Sigmoid colon (tissue), 7 donors: ENCODE measurements at regions of chr5 and their contacts with region 1.

Region 1: GRCh38 chr5:40688127-40688761 is 8.5 kb downstream of the PTGER4 start:
- DNase-seq: peak; percentile 91
- H3K4me3 ChIP-seq: peak overlapping the region in 2 of 4 donors; percentile 16 to 80
- H3K27ac ChIP-seq: peak overlapping the region; percentile 16 to 93 (median 88)
- H3K4me1 ChIP-seq: peaks cover 0 to 71% (median 40%) of the 10 kb centered on the region in 4 donors
- H3K27me3 ChIP-seq: no peaks in the 10 kb centered on the region
- CTCF ChIP-seq: peak; percentile 70 to 88 (median 82)
- EP300 ChIP-seq: no peak
- POLR2A ChIP-seq: no peak

Region 2: GRCh38 chr5:39578887-39579497 is 1109.3 kb before region 1 on chr5:
- intact Hi-C with region 1: loop called (anchors 5 kb)
- DNase-seq: no peak
- H3K4me3 ChIP-seq: no peak overlapping the region
- H3K27ac ChIP-seq: no peak overlapping the region
- H3K4me1 ChIP-seq: no peaks in the 10 kb centered on the region
- H3K27me3 ChIP-seq: no peaks in the 10 kb centered on the region
- CTCF ChIP-seq: peak in 3 of 4 experiments; percentile 28 to 71 (median 43)
- EP300 ChIP-seq: no peak
- POLR2A ChIP-seq: no peak

Region 3: DNA sequence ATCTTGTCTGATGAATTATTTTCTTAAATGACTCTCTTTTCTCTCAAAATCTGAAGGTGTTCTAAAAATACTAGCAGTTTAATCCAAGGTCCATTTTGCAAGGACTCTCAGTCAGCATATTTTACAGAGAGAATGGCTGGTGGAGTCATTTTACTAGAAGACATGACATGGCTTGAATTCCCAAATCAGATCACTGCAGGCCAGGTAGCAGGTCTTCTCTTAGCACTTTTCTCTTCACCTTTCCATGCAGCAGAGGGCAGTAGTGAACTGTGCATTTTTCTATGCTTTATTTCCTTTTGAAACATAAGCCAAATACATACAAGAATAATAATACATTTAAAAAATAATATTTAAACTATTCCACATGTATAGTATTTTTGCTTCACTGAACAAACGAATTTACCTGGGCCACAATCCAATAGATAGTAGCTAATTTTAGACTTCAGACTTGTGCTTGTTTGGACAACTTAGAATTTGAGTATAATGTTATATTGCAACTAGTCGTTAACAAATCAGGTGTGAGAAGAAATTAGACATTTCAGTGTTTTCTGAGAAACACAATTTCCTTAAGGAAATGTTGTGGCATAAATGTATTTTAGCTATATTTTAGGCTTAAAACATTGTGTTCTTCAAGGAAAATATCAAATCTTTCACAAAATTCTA is 974.1 kb before region 1 on chr5:
- intact Hi-C with region 1: loop called (anchors 2 kb)
- DNase-seq: no peak
- H3K4me3 ChIP-seq: no peak overlapping the region
- H3K27ac ChIP-seq: no peak overlapping the region
- H3K4me1 ChIP-seq: peaks cover 0 to 5% (median 0%) of the 10 kb centered on the region in 4 donors
- H3K27me3 ChIP-seq: no peaks in the 10 kb centered on the region
- CTCF ChIP-seq: peak in 3 of 4 experiments; percentile 52 to 69 (median 58)
- EP300 ChIP-seq: no peak
- POLR2A ChIP-seq: no peak

Region 4: DNA sequence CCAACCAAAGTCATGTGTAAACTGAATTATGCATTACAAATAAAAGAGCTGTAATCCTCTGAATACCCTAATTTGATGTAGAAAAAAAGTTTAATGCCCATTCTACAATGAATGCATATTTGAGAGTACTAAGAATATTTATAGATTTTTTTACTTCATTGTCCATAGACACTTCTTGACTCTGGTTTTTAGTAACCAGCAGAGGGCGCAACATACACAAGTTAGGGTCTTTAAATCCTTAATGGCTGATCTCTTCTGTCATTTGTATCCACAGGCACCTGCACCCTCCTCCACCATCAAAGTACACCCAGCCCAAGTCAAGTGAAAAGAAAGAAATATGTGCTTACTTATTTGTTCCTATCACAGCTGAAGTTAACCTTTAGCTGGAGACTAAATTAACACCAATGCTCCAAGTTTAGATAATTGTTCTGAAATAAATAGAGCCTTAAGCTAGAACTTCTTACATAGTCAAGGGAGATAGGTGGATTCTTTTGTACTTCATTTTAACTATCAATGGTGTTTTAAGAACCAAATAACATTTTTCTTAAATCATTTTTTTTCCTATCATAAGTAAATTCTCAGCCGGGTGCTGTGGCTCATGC is 739.3 kb before region 1 on chr5:
- intact Hi-C with region 1: loop called (anchors 1 kb)
- DNase-seq: peak; percentile 68
- H3K4me3 ChIP-seq: no peak overlapping the region
- H3K27ac ChIP-seq: no peak overlapping the region
- H3K4me1 ChIP-seq: no peaks in the 10 kb centered on the region
- H3K27me3 ChIP-seq: no peaks in the 10 kb centered on the region
- CTCF ChIP-seq: peak; percentile 27 to 67 (median 44)
- EP300 ChIP-seq: no peak
- POLR2A ChIP-seq: no peak

Region 5: GRCh38 chr5:40378396-40379177 is 309.7 kb before region 1 on chr5:
- intact Hi-C with region 1: loop called (anchors 10 kb)
- DNase-seq: no peak
- H3K4me3 ChIP-seq: no peak overlapping the region
- H3K27ac ChIP-seq: no peak overlapping the region
- H3K4me1 ChIP-seq: peaks cover 0 to 27% (median 14%) of the 10 kb centered on the region in 4 donors
- H3K27me3 ChIP-seq: no peaks in the 10 kb centered on the region
- CTCF ChIP-seq: no peak
- EP300 ChIP-seq: no peak
- POLR2A ChIP-seq: no peak

Region 6: DNA sequence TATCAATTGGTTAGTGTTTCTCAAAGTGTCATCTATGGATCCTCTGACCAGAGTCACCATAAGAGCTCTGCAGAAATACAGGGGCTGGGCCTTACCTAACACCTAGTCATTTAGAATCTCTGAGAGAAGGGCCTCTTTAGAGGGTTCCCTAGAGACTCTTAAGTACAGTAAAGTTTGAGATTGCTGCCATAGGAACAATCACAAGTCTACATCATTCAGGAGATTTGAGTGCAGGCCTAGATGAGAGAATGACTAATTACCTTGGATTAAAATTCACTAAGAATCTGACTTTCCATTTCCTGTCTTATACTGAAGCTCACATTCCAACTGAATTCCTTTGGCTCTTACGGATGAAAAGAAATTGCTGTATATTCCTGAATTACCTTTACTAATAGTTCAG is 190.7 kb before region 1 on chr5:
- intact Hi-C with region 1: no loop called
- DNase-seq: no peak
- H3K4me3 ChIP-seq: no peak overlapping the region
- H3K27ac ChIP-seq: no peak overlapping the region
- H3K4me1 ChIP-seq: no peaks in the 10 kb centered on the region
- H3K27me3 ChIP-seq: no peaks in the 10 kb centered on the region
- CTCF ChIP-seq: no peak
- EP300 ChIP-seq: no peak
- POLR2A ChIP-seq: no peak

Region 7: DNA sequence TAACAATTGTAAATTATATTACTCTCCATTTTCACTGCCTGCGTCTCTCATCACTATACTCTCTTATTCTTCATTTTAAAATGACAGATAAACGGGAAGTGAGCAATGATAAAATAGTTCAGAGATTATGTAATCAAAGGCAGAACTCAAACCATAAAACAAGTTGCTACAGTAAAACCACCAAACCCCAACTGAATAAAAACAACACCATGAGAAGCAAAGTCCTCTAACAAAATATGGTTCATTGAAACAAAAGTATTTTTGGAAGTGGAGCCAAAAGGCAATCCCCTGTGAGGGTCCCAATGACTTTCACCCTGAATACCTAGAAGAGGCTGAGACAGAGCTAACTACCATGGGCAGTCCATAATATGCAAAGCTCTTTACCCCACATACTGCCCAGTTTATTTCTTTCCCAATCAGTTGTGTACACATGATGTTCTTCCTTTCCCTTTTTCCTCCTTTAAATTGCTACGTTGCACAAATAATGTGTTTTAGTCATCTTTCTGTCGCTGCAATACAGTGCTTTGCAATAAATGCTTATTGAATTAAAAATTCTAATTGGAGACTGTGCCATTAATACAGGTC is 72.6 kb before region 1 on chr5:
- intact Hi-C with region 1: no loop called
- DNase-seq: no peak
- H3K4me3 ChIP-seq: no peak overlapping the region
- H3K27ac ChIP-seq: peak overlapping the region in 1 of 4 donors; percentile 9
- H3K4me1 ChIP-seq: no peaks in the 10 kb centered on the region
- H3K27me3 ChIP-seq: no peaks in the 10 kb centered on the region
- CTCF ChIP-seq: no peak
- EP300 ChIP-seq: no peak
- POLR2A ChIP-seq: no peak

Region 8: GRCh38 chr5:40736103-40736875 is 48.0 kb after region 1 on chr5:
- intact Hi-C with region 1: loop called (anchors 5 kb)
- DNase-seq: no peak
- H3K4me3 ChIP-seq: no peak overlapping the region
- H3K27ac ChIP-seq: no peak overlapping the region
- H3K4me1 ChIP-seq: peaks cover 0 to 30% (median 26%) of the 10 kb centered on the region in 4 donors
- H3K27me3 ChIP-seq: no peaks in the 10 kb centered on the region
- CTCF ChIP-seq: peak; percentile 44 to 71 (median 56)
- EP300 ChIP-seq: no peak
- POLR2A ChIP-seq: no peak

Region 9: DNA sequence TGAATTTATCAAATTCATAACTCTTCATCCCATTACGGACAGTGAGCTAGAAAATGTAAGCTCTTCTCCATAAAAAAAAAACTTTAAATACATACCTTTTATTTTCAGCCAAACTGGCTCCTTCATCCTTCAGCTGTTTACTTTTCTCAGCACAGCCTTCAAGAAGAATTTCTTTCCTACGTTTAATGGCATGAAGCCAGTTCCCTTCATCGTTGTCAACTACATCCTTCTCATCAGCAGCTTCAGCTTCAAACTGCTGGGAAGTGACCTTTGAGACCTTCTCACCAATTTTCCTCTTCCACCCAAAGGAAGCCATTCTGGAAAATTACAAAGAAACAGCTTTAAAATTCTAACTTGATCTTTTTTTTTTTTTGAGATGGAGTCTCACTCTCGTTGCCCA is 58.5 kb after region 1 on chr5:
- intact Hi-C with region 1: no loop called
- DNase-seq: no peak
- H3K4me3 ChIP-seq: no peak overlapping the region
- H3K27ac ChIP-seq: no peak overlapping the region
- H3K4me1 ChIP-seq: peaks cover 0 to 19% (median 10%) of the 10 kb centered on the region in 4 donors
- H3K27me3 ChIP-seq: no peaks in the 10 kb centered on the region
- CTCF ChIP-seq: no peak
- EP300 ChIP-seq: no peak
- POLR2A ChIP-seq: no peak

Region 10: GRCh38 chr5:40914835-40915234 is 226.6 kb after region 1 on chr5:
- intact Hi-C with region 1: no loop called
- DNase-seq: no peak
- H3K4me3 ChIP-seq: peak overlapping the region in 3 of 4 donors; percentile 5 to 27 (median 13)
- H3K27ac ChIP-seq: peak overlapping the region in 1 of 4 donors; percentile 19
- H3K4me1 ChIP-seq: no peaks in the 10 kb centered on the region
- H3K27me3 ChIP-seq: no peaks in the 10 kb centered on the region
- CTCF ChIP-seq: no peak
- EP300 ChIP-seq: no peak
- POLR2A ChIP-seq: no peak